Gastrocnemius medialis (tissue), 4 donors: ENCODE measurements at regions of chrX and their contacts with region 1.

Region 1: GRCh38 chrX:53317365-53318069 is 36.1 kb upstream of the IQSEC2 start:
- DNase-seq: peak in 1 of 2 donors; percentile 48
- ATAC-seq: peak in 1 of 2 donors; percentile 57
- H3K4me3 ChIP-seq: peak overlapping the region in 2 of 4 donors; percentile 27 to 68
- H3K27ac ChIP-seq: no peak overlapping the region
- H3K4me1 ChIP-seq: peaks cover 0 to 6% of the 10 kb centered on the region in 2 donors
- H3K27me3 ChIP-seq: peaks cover 0 to 28% (median 24%) of the 10 kb centered on the region in 3 donors
- CTCF ChIP-seq: peak; percentile 24 to 84 (median 75)
- POLR2A ChIP-seq: no peak

Region 2: GRCh38 chrX:53071604-53072417 is 245.7 kb before region 1 on chrX:
- in situ Hi-C with region 1: no loop called
- intact Hi-C with region 1: loop called (anchors 10 kb)
- DNase-seq: peak; percentile 74 to 84
- ATAC-seq: peak; percentile 94 to 95
- H3K4me3 ChIP-seq: peak overlapping the region; percentile 32 to 44 (median 34)
- H3K27ac ChIP-seq: peak overlapping the region; percentile 82 to 86 (median 84)
- H3K4me1 ChIP-seq: peaks cover 0 to 10% of the 10 kb centered on the region in 2 donors
- H3K27me3 ChIP-seq: no peaks in the 10 kb centered on the region
- CTCF ChIP-seq: peak; percentile 65 to 81 (median 78)
- POLR2A ChIP-seq: peak; percentile 28 to 31

Region 3: GRCh38 chrX:53284684-53285447 is 32.7 kb before region 1 on chrX:
- in situ Hi-C with region 1: no loop called
- intact Hi-C with region 1: loop called (anchors 2 kb)
- DNase-seq: peak; percentile 44 to 72
- ATAC-seq: peak; percentile 16 to 17
- H3K4me3 ChIP-seq: no peak overlapping the region
- H3K27ac ChIP-seq: peak overlapping the region; percentile 12 to 93 (median 88)
- H3K4me1 ChIP-seq: peaks cover 64 to 68% of the 10 kb centered on the region in 2 donors
- H3K27me3 ChIP-seq: no peaks in the 10 kb centered on the region
- CTCF ChIP-seq: peak; percentile 57 to 89 (median 84)
- POLR2A ChIP-seq: no peak

Region 4: GRCh38 chrX:53330331-53330730 is 12.8 kb after region 1 on chrX:
- in situ Hi-C with region 1: no loop called
- intact Hi-C with region 1: loop called (anchors 2 kb)
- DNase-seq: no peak
- ATAC-seq: no peak
- H3K4me3 ChIP-seq: no peak overlapping the region
- H3K27ac ChIP-seq: no peak overlapping the region
- H3K4me1 ChIP-seq: no peaks in the 10 kb centered on the region
- H3K27me3 ChIP-seq: peaks cover 0 to 12% (median 0%) of the 10 kb centered on the region in 3 donors
- CTCF ChIP-seq: no peak
- POLR2A ChIP-seq: no peak

Region 5: DNA sequence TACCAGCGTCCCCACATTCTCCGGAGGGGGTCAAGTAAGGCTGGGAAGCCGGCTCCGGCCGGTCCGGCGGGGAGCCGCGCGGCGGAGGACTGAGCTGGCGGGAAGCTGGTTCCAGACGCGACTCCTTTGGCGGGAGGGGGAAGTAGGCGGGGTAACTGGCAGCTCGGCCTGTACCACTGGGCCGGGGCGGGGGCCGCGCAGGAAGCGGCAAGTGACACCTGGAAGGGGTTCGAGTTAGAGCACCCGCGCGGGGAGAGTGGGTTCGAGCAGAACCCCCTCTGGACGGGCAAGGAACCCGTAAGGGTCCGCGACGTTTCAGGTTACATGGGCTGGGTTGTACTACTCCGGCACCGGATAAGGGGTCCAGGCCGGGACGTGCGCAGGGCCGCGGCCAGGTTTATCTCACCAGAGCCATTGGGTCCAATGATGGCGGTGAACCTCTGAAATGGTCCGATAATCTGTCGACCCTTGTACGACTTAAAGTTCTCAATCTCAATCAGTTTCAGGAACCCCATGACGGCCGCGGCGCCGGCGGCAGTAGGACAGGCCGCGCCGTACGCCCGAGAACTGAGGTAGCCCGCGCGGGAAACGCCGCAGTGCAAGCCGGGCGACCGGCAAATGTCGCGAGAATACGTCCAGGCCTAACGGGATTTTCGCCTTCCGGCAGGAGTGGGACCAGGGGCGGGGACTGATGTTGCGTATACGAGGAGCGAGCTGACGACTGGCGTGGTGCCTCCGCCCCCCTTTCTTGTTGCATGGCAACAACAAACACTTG is 104.8 kb after region 1 on chrX and contains the start of gene SMC1A:
- in situ Hi-C with region 1: loop called in 3 of 4 experiments (anchors 10 to 25 kb)
- intact Hi-C with region 1: no loop called
- DNase-seq: peak; percentile 90 to 94
- ATAC-seq: peak; percentile 95 to 96
- H3K4me3 ChIP-seq: peak within 1 kb of the TSS; percentile 65 to 89 (median 81)
- H3K27ac ChIP-seq: peak within 1 kb of the TSS; percentile 91 to 96 (median 94)
- H3K4me1 ChIP-seq: peaks cover 11 to 29% of the 10 kb centered on the region in 2 donors
- H3K27me3 ChIP-seq: no peaks in the 10 kb centered on the region
- CTCF ChIP-seq: peak in 1 of 5 experiments; percentile 10
- POLR2A ChIP-seq: peak; percentile 60 to 73
- total RNA-seq, gene SMC1A: 12.9 to 23.5 (median 17.1) TPM

Region 6: DNA sequence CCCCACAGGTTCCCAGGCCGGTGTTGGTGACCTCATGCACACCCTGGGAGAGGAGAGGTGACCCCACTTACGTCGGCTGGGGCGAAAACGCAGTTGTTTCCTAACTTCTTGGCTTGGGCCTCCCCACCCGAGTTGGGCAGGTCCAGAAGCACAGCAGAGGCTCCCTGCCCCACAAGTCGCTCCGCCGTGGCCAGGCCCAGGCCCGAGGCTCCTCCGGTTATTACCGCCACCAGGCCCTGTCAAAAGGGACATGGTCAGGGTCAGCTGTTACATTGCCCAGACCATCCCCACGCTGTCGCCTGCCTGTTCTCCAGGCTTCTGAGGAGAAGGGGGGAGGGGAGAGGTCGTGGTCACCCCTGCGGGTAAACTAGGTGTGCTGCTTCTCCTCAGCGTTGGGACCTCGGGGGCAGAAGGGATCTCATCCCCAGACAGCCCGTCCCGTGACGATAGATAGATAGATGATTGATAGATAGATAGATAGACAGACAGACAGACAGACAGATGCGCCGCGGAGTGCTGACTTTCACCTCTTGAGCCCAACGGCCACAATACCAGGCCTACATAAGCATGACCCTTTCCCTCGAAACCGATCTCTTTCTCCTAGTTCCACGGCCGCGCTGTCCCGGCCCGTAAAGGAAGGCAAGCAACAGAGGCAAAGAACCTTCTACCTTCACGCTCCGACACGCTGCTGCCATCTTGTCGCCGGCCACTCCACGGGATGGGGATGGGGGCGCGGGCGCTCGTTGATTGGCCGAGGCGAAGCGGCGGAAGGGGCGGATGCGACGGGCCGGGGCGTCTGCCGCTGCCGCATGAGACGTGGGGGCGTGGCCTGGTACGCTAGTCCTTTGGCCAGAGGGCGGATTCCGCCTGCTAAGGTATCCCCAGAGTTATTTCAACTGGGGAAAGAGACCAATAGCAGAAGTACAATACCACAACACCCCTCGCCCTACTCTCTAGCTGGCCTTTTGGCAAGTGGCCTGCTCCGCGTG is 116.4 kb after region 1 on chrX and contains the start of gene HSD17B10:
- in situ Hi-C with region 1: loop called (anchors 5 to 25 kb)
- intact Hi-C with region 1: loop called (anchors 2 kb)
- DNase-seq: peak; percentile 78 to 87
- ATAC-seq: peak; percentile 87 to 93
- H3K4me3 ChIP-seq: peak within 1 kb of the TSS; percentile 63 to 71 (median 69)
- H3K27ac ChIP-seq: peak within 1 kb of the TSS; percentile 78 to 90 (median 86)
- H3K4me1 ChIP-seq: peaks cover 5 to 9% of the 10 kb centered on the region in 2 donors
- H3K27me3 ChIP-seq: no peaks in the 10 kb centered on the region
- CTCF ChIP-seq: no peak
- POLR2A ChIP-seq: peak; percentile 58 to 83
- total RNA-seq, gene HSD17B10: 62.2 to 106 (median 75.3) TPM